CD4-positive, alpha-beta memory T cell (primary cell): ENCODE measurements at regions of chr1 and their contacts with region 1.

Region 1: DNA sequence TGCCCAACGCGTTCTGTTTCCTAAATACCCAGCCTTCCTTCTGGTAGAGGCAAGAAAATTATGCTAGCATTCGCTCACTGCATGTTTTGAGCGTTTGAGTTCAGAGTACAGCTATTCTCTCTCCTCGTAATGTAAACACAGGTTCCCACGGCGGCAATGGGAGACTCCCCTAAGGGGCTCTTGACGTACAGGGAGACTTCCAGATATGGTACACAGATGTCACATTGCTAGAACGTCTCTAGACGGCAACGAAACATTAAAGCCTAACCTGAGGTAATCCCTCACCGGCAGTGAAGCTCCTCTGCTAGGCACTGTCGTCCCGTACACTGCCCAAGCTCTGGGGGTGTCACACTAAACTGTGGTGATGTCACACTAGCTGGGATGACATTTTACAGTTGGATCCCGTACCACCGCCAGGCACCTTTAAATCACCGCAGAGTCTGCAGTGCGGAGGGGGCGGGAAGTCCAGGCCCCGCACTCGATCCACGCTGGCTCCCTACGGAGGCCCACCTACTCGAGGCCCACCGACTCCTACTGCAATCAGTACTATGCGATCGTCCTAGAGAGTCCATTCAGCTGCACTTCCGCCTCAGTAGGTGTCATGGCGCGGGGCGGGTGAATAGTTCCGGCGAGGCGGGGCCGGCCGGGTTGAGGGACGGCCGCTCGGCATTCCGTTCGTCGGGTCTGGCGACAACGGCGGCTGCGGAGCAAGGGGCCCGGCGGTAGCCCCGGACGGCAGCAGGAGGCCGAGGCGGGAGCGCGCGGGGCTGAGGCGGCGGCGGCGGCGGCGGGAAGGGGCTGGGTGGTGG is at the start of gene HIPK1:
- DNase-seq: peak; percentile 92 to 94 (median 93)
- H3K4me3 ChIP-seq: peak within 1 kb of the TSS; percentile 79 to 98
- H3K4me3 Mint-ChIP-seq: peak within 1 kb of the TSS; percentile 96 to 99 (median 98)
- H3K27ac ChIP-seq: peak within 1 kb of the TSS; percentile 97
- H3K27ac Mint-ChIP-seq: peak within 1 kb of the TSS; percentile 97 to 100 (median 100)
- H3K4me1 ChIP-seq: peaks cover 42% of the 10 kb centered on the region
- H3K4me1 Mint-ChIP-seq: peaks cover 34 to 59% (median 47%) of the 10 kb centered on the region in 4 donors
- H3K27me3 ChIP-seq: no peaks in the 10 kb centered on the region
- H3K27me3 Mint-ChIP-seq: no peaks in the 10 kb centered on the region
- total RNA-seq, gene HIPK1: 107 to 110 TPM

Region 2: DNA sequence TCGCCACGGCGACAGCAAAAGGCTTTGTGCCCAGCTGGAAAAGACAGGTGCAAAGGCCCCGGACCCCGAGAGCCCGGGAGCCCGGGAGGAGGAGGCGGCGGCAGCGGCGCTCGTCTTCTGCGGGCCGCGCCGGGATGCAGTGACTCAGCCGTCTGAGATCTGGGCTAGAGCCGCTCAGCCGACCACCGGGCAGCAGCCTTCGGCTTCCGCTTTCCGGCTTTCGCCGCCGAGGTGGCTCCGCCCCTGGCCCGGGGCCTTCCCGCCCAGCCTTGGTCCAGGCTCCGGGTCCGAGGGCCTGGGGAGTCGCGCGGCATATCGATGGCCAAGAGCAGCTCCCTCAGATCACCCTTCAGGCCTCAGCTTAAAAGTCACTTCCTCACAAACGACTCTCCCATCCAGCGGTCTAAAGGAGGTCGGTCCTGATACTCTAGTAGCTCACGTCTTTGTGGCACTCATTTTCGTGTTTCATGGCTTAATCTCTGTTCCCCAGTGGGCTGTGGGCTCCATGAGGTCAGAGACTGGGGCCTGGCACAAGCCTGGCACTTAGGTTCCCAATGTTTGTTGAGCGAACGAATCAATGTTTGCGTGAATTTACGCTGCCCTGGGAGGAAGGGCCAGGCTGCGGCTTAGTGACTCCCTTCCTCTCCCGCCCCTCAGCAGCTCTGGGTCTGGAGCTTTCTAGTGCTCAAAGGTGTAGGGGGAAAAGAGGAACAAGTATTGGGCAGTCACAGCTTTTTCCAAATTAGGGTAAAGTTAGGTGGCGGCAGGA is 169.6 kb before region 1 on chr1 and contains the start of gene PHTF1:
- CTCF ChIA-PET with region 1: no interaction called
- POLR2A ChIA-PET with region 1: interaction called, 19 read pairs
- intact Hi-C with region 1: no loop called
- DNase-seq: peak in 4 of 5 donors; percentile 33 to 70 (median 46)
- H3K4me3 ChIP-seq: peak within 1 kb of the TSS; percentile 59 to 77
- H3K4me3 Mint-ChIP-seq: peak within 1 kb of the TSS; percentile 92 to 98 (median 94)
- H3K27ac ChIP-seq: peak within 1 kb of the TSS; percentile 91
- H3K27ac Mint-ChIP-seq: peak within 1 kb of the TSS; percentile 94 to 98 (median 97)
- H3K4me1 ChIP-seq: peaks cover 16% of the 10 kb centered on the region
- H3K4me1 Mint-ChIP-seq: peaks cover 16 to 36% (median 25%) of the 10 kb centered on the region in 4 donors
- H3K27me3 ChIP-seq: no peaks in the 10 kb centered on the region
- H3K27me3 Mint-ChIP-seq: no peaks in the 10 kb centered on the region
- total RNA-seq, gene PHTF1: 8.7 to 9.8 TPM

Region 3: GRCh38 chr1:113850080-113850803 is 78.9 kb before region 1 on chr1:
- CTCF ChIA-PET with region 1: no interaction called
- POLR2A ChIA-PET with region 1: interaction called, 11 read pairs
- intact Hi-C with region 1: no loop called
- DNase-seq: peak in 2 of 5 donors; percentile 11 to 21
- H3K4me3 ChIP-seq: no peak overlapping the region
- H3K4me3 Mint-ChIP-seq: peak overlapping the region in 4 of 8 donors; percentile 8 to 74 (median 58)
- H3K27ac ChIP-seq: no peak overlapping the region
- H3K27ac Mint-ChIP-seq: peak overlapping the region; percentile 40 to 88 (median 77)
- H3K4me1 ChIP-seq: peaks cover 11% of the 10 kb centered on the region
- H3K4me1 Mint-ChIP-seq: peaks cover 12 to 18% (median 15%) of the 10 kb centered on the region in 4 donors
- H3K27me3 ChIP-seq: no peaks in the 10 kb centered on the region
- H3K27me3 Mint-ChIP-seq: no peaks in the 10 kb centered on the region

Region 4: GRCh38 chr1:113904674-113905434 is 24.3 kb before region 1 on chr1 and contains the starts of genes AP4B1 and DCLRE1B:
- CTCF ChIA-PET with region 1: interaction called, 103 read pairs
- POLR2A ChIA-PET with region 1: interaction called, 277 read pairs
- intact Hi-C with region 1: loop called (anchors 1 kb)
- DNase-seq: peak; percentile 97 to 99 (median 98)
- H3K4me3 ChIP-seq: peak within 1 kb of the TSS; percentile 68 to 98
- H3K4me3 Mint-ChIP-seq: peak within 1 kb of the TSS; percentile 94 to 100 (median 99)
- H3K27ac ChIP-seq: peak within 1 kb of the TSS; percentile 96
- H3K27ac Mint-ChIP-seq: peak within 1 kb of the TSS; percentile 96 to 100 (median 100)
- H3K4me1 ChIP-seq: peaks cover 44% of the 10 kb centered on the region
- H3K4me1 Mint-ChIP-seq: peaks cover 36 to 74% (median 47%) of the 10 kb centered on the region in 4 donors
- H3K27me3 ChIP-seq: no peaks in the 10 kb centered on the region
- H3K27me3 Mint-ChIP-seq: no peaks in the 10 kb centered on the region
- total RNA-seq, gene AP4B1: 74.5 to 75.5 TPM
- total RNA-seq, gene DCLRE1B: 5.1 to 5.4 TPM

Region 5: GRCh38 chr1:113949007-113949406 is 19.9 kb after region 1 on chr1:
- CTCF ChIA-PET with region 1: interaction called, 98 read pairs
- POLR2A ChIA-PET with region 1: interaction called, 120 read pairs
- intact Hi-C with region 1: loop called (anchors 1 kb)
- DNase-seq: peak in 2 of 5 donors; percentile 27 to 41
- H3K4me3 ChIP-seq: no peak overlapping the region
- H3K4me3 Mint-ChIP-seq: peak overlapping the region in 4 of 8 donors; percentile 51 to 86 (median 72)
- H3K27ac ChIP-seq: peak overlapping the region; percentile 5
- H3K27ac Mint-ChIP-seq: peak overlapping the region; percentile 69 to 95 (median 91)
- H3K4me1 ChIP-seq: peaks cover 88% of the 10 kb centered on the region
- H3K4me1 Mint-ChIP-seq: peaks cover 47 to 93% (median 65%) of the 10 kb centered on the region in 4 donors
- H3K27me3 ChIP-seq: no peaks in the 10 kb centered on the region
- H3K27me3 Mint-ChIP-seq: no peaks in the 10 kb centered on the region

Region 6: DNA sequence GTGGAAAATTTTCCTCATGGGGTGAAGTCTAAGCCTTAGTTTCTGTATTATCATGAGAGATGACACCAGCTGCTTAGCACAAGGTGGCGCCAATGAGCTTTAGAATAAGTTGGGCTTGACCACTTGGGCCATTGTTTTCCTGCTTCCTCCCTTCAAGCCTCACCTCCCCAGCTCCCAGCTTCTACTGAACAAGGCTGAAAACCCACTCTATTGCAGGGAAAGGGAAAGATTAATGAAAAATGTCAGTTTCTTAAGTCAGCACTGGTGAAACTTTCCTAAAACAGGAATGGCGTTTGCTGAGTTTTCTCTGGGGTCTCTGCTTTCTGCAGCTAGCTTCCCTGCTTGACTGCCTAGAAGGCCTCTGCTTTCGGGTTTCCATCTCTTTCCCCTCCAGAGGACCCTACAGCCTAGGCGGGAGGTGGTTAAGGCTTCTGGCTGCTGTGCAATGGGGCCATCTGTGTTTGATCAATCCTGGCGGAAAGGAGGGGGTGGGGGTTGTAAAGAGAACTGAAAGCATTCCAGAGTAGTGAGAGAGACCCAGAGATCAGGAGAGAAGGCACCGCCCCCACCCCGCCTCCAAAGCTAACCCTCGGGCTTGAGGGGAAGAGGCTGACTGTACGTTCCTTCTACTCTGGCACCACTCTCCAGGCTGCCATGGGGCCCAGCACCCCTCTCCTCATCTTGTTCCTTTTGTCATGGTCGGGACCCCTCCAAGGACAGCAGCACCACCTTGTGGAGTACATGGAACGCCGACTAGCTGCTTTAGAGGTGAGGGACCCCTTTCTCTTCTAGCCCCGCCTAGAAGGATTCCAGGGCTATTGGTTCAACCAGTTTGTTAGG is 49.9 kb after region 1 on chr1 and contains the start of gene OLFML3:
- CTCF ChIA-PET with region 1: interaction called, 3 read pairs
- POLR2A ChIA-PET with region 1: interaction called, 3 read pairs
- intact Hi-C with region 1: loop called (anchors 2 kb)
- DNase-seq: peak in 3 of 5 donors; percentile 17 to 27 (median 22)
- H3K4me3 ChIP-seq: no peak within 1 kb of the TSS
- H3K4me3 Mint-ChIP-seq: peak within 1 kb of the TSS in 1 of 8 donors; percentile 17
- H3K27ac ChIP-seq: no peak within 1 kb of the TSS
- H3K27ac Mint-ChIP-seq: peak within 1 kb of the TSS in 5 of 7 donors; percentile 30 to 67 (median 50)
- H3K4me1 ChIP-seq: no peaks in the 10 kb centered on the region
- H3K4me1 Mint-ChIP-seq: peaks cover 11 to 41% (median 27%) of the 10 kb centered on the region in 4 donors
- H3K27me3 ChIP-seq: no peaks in the 10 kb centered on the region
- H3K27me3 Mint-ChIP-seq: no peaks in the 10 kb centered on the region
- total RNA-seq, gene OLFML3: 0.42 to 0.70 TPM